K562 (cell line): ENCODE measurements at regions of chr7 and their contacts with region 1.

Region 1: DNA sequence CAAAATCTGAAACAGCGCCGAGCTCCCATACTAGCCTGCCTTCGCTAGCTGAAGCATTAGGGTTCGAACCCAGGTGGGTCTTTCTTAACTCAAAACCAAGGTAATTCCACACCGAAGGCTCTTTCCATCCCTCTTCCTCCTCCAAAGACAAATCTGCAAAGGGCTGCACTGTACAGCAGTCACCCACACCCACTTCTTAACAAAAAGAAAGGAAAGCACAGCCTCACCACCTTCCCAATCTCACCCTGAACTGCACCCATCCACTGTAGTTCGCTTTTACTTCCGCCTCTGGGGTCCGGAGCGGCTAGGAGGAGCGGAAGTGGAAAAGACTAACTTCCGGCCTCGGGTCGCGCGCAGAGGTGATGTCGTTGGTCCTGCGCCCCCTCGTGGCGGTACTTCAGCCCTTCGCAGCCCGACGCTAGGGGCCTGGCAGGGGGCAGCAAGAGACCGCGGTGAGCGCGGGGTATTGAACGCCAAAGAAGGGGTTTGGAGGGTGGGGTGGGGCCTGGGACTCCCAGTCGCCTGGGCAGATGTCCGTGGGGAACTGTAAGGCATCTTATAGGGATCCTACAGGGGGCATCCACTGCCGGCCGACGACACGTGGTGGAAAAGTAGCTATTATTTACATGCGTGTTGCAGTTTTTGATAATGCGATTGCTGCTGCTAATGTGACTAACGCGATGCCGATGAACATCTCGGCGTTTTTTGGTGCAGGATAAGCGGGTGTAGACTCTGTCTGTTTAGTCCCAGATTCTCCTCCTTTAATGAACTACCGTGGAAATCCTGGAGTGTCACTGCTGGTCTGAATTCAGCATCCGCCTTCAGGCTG is at the start of gene MTERF1:
- DNase-seq: peak; percentile 88 to 98 (median 90)
- ATAC-seq: peak; percentile 98
- H3K4me3 ChIP-seq: peak within 1 kb of the TSS; percentile 83
- H3K27ac ChIP-seq: peak within 1 kb of the TSS; percentile 79
- H3K4me1 ChIP-seq: peaks cover 0 to 4% of the 10 kb centered on the region in 2 experiments; a peak in 2 of 5 replicates
- H3K27me3 ChIP-seq: no peaks in the 10 kb centered on the region
- CTCF ChIP-seq: peak; percentile 99 to 100 (median 100)
- EP300 ChIP-seq: 0 out of 2 replicates have a peak, but pooled peaks have one; percentile 24
- POLR2A ChIP-seq: peak; percentile 98
- RAD21 ChIP-seq: peak; percentile 97 to 99
- polyA plus RNA-seq, gene MTERF1: 45.8 to 49.2 TPM

Region 2: DNA sequence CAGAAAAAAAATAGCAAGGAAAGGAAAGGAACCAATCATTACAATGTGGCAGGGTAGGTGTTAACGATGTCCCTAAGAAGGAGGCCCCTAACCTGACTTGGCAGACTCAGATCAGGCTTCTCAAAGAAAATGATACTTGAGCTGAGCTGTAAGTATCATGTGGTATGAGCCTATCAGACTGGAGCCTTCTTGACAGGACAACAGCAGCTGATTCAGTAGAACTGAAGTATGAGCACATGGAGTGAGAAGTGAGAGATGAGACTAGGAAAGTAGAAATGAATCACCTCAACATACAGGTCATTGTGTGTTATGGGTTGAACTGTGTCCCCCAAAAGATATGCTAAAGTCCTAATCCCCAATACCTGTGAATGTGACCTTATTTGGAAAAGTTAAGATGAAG is 66.4 kb before region 1 on chr7:
- CTCF ChIA-PET with region 1: no interaction called
- POLR2A ChIA-PET with region 1: no interaction called
- in situ Hi-C with region 1: no loop called
- intact Hi-C with region 1: no loop called
- DNase-seq: no peak
- ATAC-seq: no peak
- H3K4me3 ChIP-seq: no peak overlapping the region
- H3K27ac ChIP-seq: no peak overlapping the region
- H3K4me1 ChIP-seq: 0 out of 5 replicates have a peak, but pooled peaks cover 0 to 5% of the 10 kb centered on the region in 2 experiments
- H3K27me3 ChIP-seq: peaks cover 0 to 4% of the 10 kb centered on the region in 2 experiments; a peak in 1 of 5 replicates
- CTCF ChIP-seq: no peak
- EP300 ChIP-seq: no peak
- POLR2A ChIP-seq: no peak
- RAD21 ChIP-seq: no peak

Region 3: DNA sequence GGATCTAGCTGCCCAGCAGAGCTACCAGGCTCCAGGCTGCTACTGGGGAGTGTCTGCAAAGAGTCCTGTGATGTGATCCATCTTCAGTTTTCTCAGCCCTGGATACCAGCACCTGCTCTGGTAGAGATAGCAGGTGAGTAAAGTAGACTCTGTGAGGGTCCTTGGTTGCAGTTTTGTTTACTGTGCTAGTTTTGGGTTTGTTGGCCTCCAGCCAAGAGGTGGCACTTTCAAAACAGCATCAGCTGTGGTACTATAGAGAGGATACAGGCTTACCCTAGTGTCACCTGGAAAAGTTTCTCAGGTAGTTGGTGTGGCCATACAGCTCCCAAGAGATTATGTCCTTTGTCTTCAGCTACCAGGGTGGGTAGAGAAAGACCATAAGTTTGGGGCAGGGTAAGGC is 56.4 kb before region 1 on chr7:
- CTCF ChIA-PET with region 1: no interaction called
- POLR2A ChIA-PET with region 1: no interaction called
- in situ Hi-C with region 1: no loop called
- intact Hi-C with region 1: no loop called
- DNase-seq: no peak
- ATAC-seq: no peak
- H3K4me3 ChIP-seq: no peak overlapping the region
- H3K27ac ChIP-seq: no peak overlapping the region
- H3K4me1 ChIP-seq: no peaks in the 10 kb centered on the region
- H3K27me3 ChIP-seq: no peaks in the 10 kb centered on the region
- CTCF ChIP-seq: no peak
- EP300 ChIP-seq: no peak
- POLR2A ChIP-seq: no peak
- RAD21 ChIP-seq: no peak

Region 4: DNA sequence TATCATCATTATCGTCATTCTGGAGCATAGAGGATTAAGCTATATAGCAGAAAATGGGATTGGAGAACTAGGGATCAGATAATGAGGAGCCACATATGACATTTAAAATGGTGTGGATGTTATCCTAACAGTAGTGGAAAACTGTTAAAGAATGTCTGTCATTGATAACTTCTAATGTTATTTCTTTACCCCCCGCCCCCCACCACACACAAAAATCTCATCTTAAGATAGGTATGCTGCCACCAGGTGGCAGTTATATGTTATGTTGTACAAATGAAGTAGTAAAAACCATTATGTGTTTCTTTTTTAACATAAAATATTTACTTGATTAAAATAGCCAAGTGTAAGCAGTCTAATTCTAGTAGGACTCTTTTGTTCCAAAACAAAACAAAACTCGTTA is 73.0 kb after region 1 on chr7:
- CTCF ChIA-PET with region 1: interaction called, 4 read pairs
- POLR2A ChIA-PET with region 1: no interaction called
- in situ Hi-C with region 1: no loop called
- intact Hi-C with region 1: loop called (anchors 2 kb)
- DNase-seq: peak; percentile 36 to 59 (median 42)
- ATAC-seq: peak; percentile 37; the same call in 2 of the 3 replicates
- H3K4me3 ChIP-seq: no peak overlapping the region
- H3K27ac ChIP-seq: no peak overlapping the region
- H3K4me1 ChIP-seq: peaks cover 0 to 10% of the 10 kb centered on the region in 2 experiments; a peak in 3 of 5 replicates
- H3K27me3 ChIP-seq: no peaks in the 10 kb centered on the region
- CTCF ChIP-seq: peak in 2 of 3 experiments; percentile 33 to 47; a peak in 3 of 6 replicates
- EP300 ChIP-seq: no peak
- POLR2A ChIP-seq: no peak
- RAD21 ChIP-seq: no peak

Region 5: DNA sequence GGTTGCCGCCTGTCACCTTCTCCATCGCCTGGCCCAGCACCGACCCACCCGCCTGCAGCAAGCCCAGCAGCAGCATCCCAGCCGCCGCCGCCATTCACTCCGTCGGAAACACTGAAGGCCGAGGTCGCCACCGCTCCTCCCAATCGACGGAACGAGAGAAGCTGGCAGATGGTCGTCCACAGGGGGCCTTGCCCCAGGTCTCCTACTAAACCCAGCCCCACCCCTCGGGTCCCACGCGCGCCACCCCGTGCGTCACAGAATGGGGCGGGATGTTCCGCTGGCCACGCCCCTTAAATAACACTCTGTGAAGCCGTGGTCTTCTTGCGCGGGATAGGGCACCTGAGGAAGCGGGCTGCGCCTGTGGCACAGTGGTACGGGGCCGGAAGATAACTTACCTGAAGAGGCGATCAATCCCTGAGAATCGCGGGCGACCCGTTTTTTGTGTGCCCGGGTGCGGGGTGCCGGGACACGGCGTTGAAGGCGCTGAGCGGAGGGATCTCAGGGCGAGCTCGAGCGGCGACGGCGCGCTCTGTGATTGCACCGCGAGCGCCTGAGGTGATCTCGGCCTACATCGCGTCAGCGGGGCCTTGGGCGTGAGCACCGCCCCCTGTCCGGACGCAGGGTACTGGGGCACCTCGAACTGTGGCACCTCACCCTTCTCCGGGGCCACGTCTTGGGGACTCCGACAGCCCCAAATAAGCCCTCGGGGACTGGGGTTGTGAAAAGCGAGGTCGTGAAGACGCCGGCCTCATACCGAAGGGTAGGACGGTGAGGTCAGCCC is 253.8 kb after region 1 on chr7 and contains the start of gene CYP51A1:
- CTCF ChIA-PET with region 1: no interaction called
- POLR2A ChIA-PET with region 1: no interaction called
- in situ Hi-C with region 1: no loop called
- intact Hi-C with region 1: loop called (anchors 2 kb)
- DNase-seq: peak; percentile 95 to 97 (median 96)
- ATAC-seq: peak; percentile 91
- H3K4me3 ChIP-seq: peak within 1 kb of the TSS; percentile 95
- H3K27ac ChIP-seq: peak within 1 kb of the TSS; percentile 99
- H3K4me1 ChIP-seq: peaks cover 19 to 20% of the 10 kb centered on the region in 2 experiments; a peak in 3 of 5 replicates
- H3K27me3 ChIP-seq: no peaks in the 10 kb centered on the region
- CTCF ChIP-seq: peak in 2 of 3 experiments; percentile 7; a peak in 2 of 6 replicates
- EP300 ChIP-seq: peak; percentile 51; the same call in 1 of the 2 replicates
- POLR2A ChIP-seq: peak; percentile 93
- RAD21 ChIP-seq: no peak; a peak in 2 of 4 replicates
- polyA plus RNA-seq, gene CYP51A1: 41.8 to 42.2 TPM

Region 6: DNA sequence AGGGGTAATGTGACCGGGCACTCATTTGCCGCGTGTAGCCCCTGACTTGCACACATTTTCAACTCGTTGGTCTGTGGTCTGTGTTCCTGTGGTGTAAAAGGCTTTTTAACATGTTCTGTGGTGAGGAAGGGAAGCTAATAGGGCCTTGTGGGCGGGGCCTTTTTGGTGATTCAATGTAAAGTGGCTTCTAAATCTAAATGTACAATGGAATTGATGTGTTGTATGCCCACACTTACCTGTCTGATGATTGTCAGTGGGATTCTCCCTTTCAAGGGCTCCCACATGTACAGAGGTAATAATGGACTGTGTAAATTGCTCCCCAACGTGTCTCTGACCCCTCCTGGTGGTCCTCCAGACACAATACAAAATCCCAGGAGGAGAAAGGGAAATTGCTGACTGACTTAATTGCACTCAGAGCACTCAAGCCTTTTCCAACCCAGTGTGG is 523.6 kb after region 1 on chr7:
- CTCF ChIA-PET with region 1: no interaction called
- POLR2A ChIA-PET with region 1: no interaction called
- in situ Hi-C with region 1: no loop called
- intact Hi-C with region 1: loop called (anchors 5 kb)
- DNase-seq: peak in 1 of 4 experiments; percentile 18
- ATAC-seq: peak; percentile 74
- H3K4me3 ChIP-seq: no peak overlapping the region
- H3K27ac ChIP-seq: no peak overlapping the region
- H3K4me1 ChIP-seq: no peaks in the 10 kb centered on the region
- H3K27me3 ChIP-seq: no peaks in the 10 kb centered on the region
- CTCF ChIP-seq: peak; percentile 44 to 58 (median 46); a peak in 4 of 6 replicates
- EP300 ChIP-seq: no peak
- POLR2A ChIP-seq: no peak
- RAD21 ChIP-seq: peak in 1 of 2 experiments; percentile 54; a peak in 2 of 4 replicates

Region 7: DNA sequence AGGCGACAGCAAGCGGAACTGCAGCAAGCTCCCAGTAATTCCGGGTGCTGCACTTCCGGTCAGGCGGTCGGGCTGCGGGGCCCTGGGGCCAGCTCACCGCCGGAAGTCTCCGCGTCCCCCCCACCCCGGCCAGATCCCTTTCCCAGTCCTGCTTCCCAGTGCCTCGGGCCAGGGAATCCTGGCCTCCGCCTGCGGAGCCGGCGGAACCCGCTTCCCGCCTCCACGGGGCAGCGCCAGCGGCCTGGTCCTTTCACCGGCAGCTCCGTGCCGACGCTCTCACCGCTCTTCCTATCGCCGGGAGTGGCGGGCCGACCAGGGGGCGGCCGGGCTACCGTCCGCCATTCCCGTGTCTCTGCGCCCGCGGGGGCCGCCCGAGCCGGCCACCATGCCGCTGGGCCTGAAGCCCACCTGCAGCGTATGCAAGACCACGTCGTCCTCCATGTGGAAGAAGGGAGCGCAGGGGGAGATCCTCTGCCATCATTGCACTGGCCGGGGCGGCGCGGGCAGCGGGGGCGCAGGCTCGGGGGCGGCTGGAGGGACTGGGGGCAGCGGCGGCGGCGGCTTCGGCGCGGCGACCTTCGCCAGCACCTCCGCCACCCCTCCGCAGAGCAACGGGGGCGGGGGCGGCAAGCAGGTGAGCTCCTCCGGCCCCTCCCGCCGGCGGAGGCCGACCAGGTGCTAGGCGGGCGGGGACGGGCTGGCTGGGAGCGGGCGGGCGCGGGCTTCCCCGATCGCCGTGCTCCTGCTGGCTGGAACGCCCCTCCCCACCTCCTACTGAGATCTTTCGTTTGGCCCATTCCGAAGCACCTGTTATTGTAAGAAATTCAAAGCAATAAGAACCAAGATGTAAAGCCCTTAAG is 566.9 kb after region 1 on chr7 and contains the start of gene GATAD1:
- CTCF ChIA-PET with region 1: interaction called, 15 read pairs
- POLR2A ChIA-PET with region 1: no interaction called
- in situ Hi-C with region 1: loop called (anchors 10 kb)
- intact Hi-C with region 1: loop called (anchors 1 kb)
- DNase-seq: peak; percentile 96 to 98 (median 97)
- ATAC-seq: peak; percentile 95
- H3K4me3 ChIP-seq: peak within 1 kb of the TSS; percentile 95
- H3K27ac ChIP-seq: peak within 1 kb of the TSS; percentile 95
- H3K4me1 ChIP-seq: peaks cover 5 to 6% of the 10 kb centered on the region in 2 experiments; a peak in 2 of 5 replicates
- H3K27me3 ChIP-seq: no peaks in the 10 kb centered on the region
- CTCF ChIP-seq: peak in 2 of 3 experiments; percentile 95 to 98; a peak in 5 of 6 replicates
- EP300 ChIP-seq: peak; percentile 63
- POLR2A ChIP-seq: peak; percentile 95
- RAD21 ChIP-seq: no peak
- polyA plus RNA-seq, gene GATAD1: 9.3 to 9.4 TPM

Region 8: DNA sequence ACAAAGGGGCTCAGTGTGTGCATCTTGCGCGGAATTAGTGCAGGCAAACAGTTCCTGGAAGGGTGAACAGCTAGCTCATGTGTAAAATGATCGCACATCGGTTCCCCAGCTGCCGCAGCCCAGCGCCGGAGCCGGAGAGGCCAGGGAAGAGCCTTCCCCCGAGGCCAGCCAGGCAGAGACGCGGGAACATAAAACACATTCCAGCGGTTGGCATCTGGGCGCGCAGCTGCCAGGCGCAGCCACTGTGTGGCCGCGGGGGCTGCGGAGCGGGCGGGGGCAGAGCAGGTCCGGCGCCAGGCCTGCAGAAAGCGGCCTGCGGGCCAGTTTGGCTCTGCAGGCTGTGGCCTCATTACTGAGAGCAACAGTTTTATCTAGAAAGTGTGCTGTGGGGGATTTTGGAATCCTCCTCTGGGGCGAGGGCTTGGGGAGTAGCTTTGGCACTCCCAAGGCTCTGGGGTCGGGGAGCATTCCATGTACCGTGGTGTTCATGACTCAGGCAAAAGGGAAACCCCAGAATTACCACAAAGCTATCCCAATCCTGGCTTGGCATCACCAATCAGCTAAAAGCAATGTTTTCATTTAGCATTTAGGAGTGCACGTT is 1162.9 kb after region 1 on chr7:
- CTCF ChIA-PET with region 1: no interaction called
- POLR2A ChIA-PET with region 1: interaction called, 3 read pairs
- in situ Hi-C with region 1: no loop called
- intact Hi-C with region 1: loop called (anchors 10 kb)
- DNase-seq: no peak
- ATAC-seq: no peak
- H3K4me3 ChIP-seq: no peak overlapping the region
- H3K27ac ChIP-seq: no peak overlapping the region
- H3K4me1 ChIP-seq: peaks cover 21 to 22% of the 10 kb centered on the region in 2 experiments
- H3K27me3 ChIP-seq: no peaks in the 10 kb centered on the region
- CTCF ChIP-seq: no peak
- EP300 ChIP-seq: no peak
- POLR2A ChIP-seq: no peak
- RAD21 ChIP-seq: no peak